Right cardiac atrium (tissue), 5 donors: ENCODE measurements at regions of chr2 and their contacts with region 1.

Region 1: DNA sequence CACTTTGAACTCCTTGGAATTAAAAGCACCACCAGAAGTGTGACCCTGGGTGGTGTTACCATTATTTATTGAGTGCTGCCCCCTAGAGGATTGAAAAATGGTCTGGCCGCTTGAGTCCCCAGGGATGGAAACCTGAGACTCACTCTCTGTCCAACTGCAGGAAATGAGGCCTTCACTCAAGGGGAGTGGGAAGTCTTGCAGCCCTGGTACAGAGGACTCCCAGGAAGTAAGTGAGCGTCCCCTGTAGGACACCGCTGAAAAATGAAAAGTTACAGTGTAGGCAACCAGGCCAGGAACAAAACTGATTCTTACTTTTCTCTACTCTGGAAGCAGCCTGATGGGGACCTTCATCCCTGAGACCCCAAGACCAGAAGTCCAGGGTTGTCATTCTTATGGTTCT is 2.2 kb upstream of the NRP2 start:
- DNase-seq: peak in 1 of 3 donors; percentile 60
- ATAC-seq: peak; percentile 14 to 36
- H3K4me3 ChIP-seq: no peak overlapping the region
- H3K27ac ChIP-seq: no peak overlapping the region
- H3K4me1 ChIP-seq: no peaks in the 10 kb centered on the region
- H3K27me3 ChIP-seq: no peaks in the 10 kb centered on the region

Region 2: GRCh38 chr2:204145263-204145751 is 1534.8 kb before region 1 on chr2:
- intact Hi-C with region 1: loop called in 1 of 4 experiments (anchors 10 kb)
- DNase-seq: peak; percentile 72 to 88 (median 88)
- ATAC-seq: peak; percentile 95 to 98
- H3K4me3 ChIP-seq: peak overlapping the region; percentile 91
- H3K27ac ChIP-seq: peak overlapping the region; percentile 29
- H3K4me1 ChIP-seq: no peaks in the 10 kb centered on the region
- H3K27me3 ChIP-seq: no peaks in the 10 kb centered on the region

Region 3: DNA sequence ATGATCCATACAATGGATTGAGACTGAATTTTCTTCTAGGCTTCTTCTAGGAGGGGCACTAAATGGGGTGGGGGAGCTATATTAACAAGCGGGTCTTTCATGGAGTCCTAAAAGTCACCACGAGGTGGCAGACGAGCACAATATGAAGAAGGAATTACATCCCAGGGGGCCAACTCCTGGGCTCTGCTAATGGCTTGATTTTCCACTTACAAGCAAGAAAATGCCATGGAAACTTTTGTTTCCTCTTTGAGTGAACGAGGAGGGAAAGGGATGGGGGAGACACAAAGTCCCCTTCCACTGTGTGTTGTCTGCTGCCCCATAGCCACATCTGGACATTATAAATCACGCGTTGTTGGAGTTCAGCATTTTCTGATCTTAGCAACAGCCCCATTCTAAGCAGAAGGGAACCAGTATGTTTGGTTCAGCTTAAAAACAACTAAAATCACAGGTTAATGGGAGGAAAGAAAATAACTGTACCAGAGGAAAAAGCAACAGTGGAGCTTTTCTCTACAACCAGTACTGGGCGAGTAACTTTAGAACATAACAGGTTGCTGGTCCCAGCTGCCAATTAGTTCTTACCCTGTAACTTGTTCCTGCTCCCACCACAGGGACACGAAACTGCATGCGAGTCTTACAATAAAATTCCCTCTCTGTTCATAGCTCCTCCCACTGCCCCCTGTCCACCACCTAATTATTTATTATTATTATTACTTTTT is 1419.7 kb before region 1 on chr2:
- intact Hi-C with region 1: loop called in 2 of 4 experiments (anchors 10 kb)
- DNase-seq: peak; percentile 66 to 86 (median 67)
- ATAC-seq: peak; percentile 76 to 82
- H3K4me3 ChIP-seq: no peak overlapping the region
- H3K27ac ChIP-seq: no peak overlapping the region
- H3K4me1 ChIP-seq: no peaks in the 10 kb centered on the region
- H3K27me3 ChIP-seq: no peaks in the 10 kb centered on the region

Region 4: GRCh38 chr2:204691911-204692510 is 988.1 kb before region 1 on chr2:
- intact Hi-C with region 1: loop called in 1 of 4 experiments (anchors 10 kb)
- DNase-seq: peak in 2 of 3 donors; percentile 13 to 32
- ATAC-seq: peak; percentile 85 to 89
- H3K4me3 ChIP-seq: no peak overlapping the region
- H3K27ac ChIP-seq: no peak overlapping the region
- H3K4me1 ChIP-seq: no peaks in the 10 kb centered on the region
- H3K27me3 ChIP-seq: no peaks in the 10 kb centered on the region

Region 5: GRCh38 chr2:205925373-205926337 is 245.6 kb after region 1 on chr2:
- intact Hi-C with region 1: loop called in 1 of 4 experiments (anchors 5 kb)
- DNase-seq: peak; percentile 80 to 92 (median 91)
- ATAC-seq: peak; percentile 89 to 92
- H3K4me3 ChIP-seq: peak overlapping the region; percentile 15
- H3K27ac ChIP-seq: no peak overlapping the region
- H3K4me1 ChIP-seq: no peaks in the 10 kb centered on the region
- H3K27me3 ChIP-seq: no peaks in the 10 kb centered on the region